ENCODE measurements at regions of chr19 and their contacts with region 1.

Region 1: GRCh38 chr19:14031719-14032480 is at the start of gene IL27RA:
- DNase-seq: peak; percentile 95
- H3K4me3 ChIP-seq: peak within 1 kb of the TSS; percentile 40 to 94 (median 72)
- H3K27ac ChIP-seq: peak within 1 kb of the TSS; percentile 85 to 98 (median 94)
- H3K4me1 ChIP-seq: peaks cover 5 to 82% (median 31%) of the 10 kb centered on the region in 6 donors
- H3K27me3 ChIP-seq: no peaks in the 10 kb centered on the region
- CTCF ChIP-seq: peak in 10 of 11 experiments; percentile 48 to 76 (median 71)
- POLR2A ChIP-seq: peak in 2 of 3 donors; percentile 39 to 60
- total RNA-seq, gene IL27RA: 15.7 to 28.7 (median 20.8) TPM

Region 2: GRCh38 chr19:13952154-13953035 is 79.5 kb before region 1 on chr19 and contains the start of gene DCAF15:
- intact Hi-C with region 1: loop called (anchors 10 kb)
- DNase-seq: peak; percentile 99
- H3K4me3 ChIP-seq: peak within 1 kb of the TSS; percentile 70 to 93 (median 78)
- H3K27ac ChIP-seq: peak within 1 kb of the TSS; percentile 82 to 94 (median 88)
- H3K4me1 ChIP-seq: peaks cover 15 to 32% (median 22%) of the 10 kb centered on the region in 6 donors
- H3K27me3 ChIP-seq: no peaks in the 10 kb centered on the region
- CTCF ChIP-seq: peak in 3 of 11 experiments; percentile 36 to 44 (median 41)
- POLR2A ChIP-seq: no peak
- total RNA-seq, gene DCAF15: 27.7 to 58.6 (median 43.2) TPM

Region 3: DNA sequence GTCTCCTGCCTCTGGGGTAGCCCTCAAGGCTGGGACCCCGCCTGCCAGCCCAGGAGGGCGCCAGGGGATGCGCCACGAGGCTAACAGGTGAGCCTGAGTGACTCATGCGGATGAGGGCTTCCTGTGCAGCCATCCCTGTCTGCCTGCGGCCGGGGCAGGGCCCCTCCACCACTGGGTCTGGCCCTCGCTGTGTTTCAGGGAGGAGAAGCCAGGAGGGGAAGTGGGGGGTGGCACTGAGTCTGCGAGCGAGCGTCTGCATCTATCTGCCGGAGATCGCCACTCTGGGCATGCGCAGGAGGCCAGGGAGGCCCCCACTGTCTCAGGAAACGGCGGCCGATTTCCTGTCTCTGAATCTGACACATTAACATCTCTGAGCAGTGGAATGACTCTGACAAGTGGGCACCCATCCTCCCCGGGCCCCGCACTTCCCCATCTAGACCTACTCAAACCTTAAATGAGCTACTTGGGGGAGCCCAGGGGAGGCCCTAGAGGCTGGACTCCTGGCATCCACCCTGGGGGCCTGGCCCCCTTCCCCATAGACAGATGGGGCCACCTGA is 45.5 kb before region 1 on chr19:
- intact Hi-C with region 1: no loop called
- DNase-seq: peak; percentile 99
- H3K4me3 ChIP-seq: peak overlapping the region in 4 of 8 donors; percentile 2 to 56 (median 14)
- H3K27ac ChIP-seq: peak overlapping the region; percentile 83 to 97 (median 94)
- H3K4me1 ChIP-seq: peaks cover 28 to 98% (median 75%) of the 10 kb centered on the region in 6 donors
- H3K27me3 ChIP-seq: no peaks in the 10 kb centered on the region
- CTCF ChIP-seq: peak in 4 of 11 experiments; percentile 13 to 27 (median 20)
- POLR2A ChIP-seq: no peak

Region 4: GRCh38 chr19:14117668-14118164 is 85.8 kb after region 1 on chr19 and contains the start of gene PRKACA:
- intact Hi-C with region 1: no loop called
- DNase-seq: peak; percentile 100
- H3K4me3 ChIP-seq: peak within 1 kb of the TSS; percentile 71 to 95 (median 86)
- H3K27ac ChIP-seq: peak within 1 kb of the TSS; percentile 90 to 99 (median 96)
- H3K4me1 ChIP-seq: peaks cover 32 to 82% (median 67%) of the 10 kb centered on the region in 6 donors
- H3K27me3 ChIP-seq: no peaks in the 10 kb centered on the region
- CTCF ChIP-seq: peak in 2 of 11 experiments; percentile 32 to 38
- POLR2A ChIP-seq: no peak
- total RNA-seq, gene PRKACA: 87.7 to 256 (median 132) TPM

Measured in spleen (tissue), 13 donors.